ENCODE measurements at regions of chr13 and their contacts with region 1.

Region 1: DNA sequence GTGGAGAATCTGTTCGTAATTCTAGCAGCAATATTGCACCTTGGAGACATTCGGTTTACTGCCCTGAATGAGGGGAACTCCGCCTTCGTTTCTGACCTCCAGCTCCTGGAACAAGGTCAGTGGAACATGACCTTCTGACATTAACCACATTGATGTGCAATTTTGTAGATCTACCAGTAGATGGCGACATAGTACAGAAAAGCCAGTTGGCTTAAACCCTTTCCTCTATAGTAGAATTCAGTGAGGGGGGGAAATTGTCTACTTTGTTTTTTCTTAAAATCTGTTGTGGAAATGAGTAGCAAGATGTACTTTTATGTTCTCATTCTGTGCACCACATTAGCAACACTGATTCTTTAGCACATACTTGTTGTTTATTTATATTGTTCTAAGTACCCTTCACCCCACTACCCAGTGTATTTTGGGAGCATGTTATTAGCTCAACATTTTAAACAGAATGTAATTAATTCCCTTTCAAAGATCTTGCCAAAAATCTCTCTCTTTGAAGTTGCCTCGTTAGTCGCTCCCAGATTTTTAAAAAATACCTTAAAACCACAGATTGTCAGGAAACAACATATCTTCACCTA is 332.2 kb downstream of the MYO16 start:
- DNase-seq: no peak
- H3K4me3 Mint-ChIP-seq: no peak overlapping the region
- H3K27ac Mint-ChIP-seq: no peak overlapping the region
- H3K4me1 Mint-ChIP-seq: no peaks in the 10 kb centered on the region
- H3K27me3 Mint-ChIP-seq: peaks cover 2% of the 10 kb centered on the region

Region 2: GRCh38 chr13:109026266-109026665 is 64.6 kb after region 1 on chr13:
- intact Hi-C with region 1: loop called (anchors 10 kb)
- DNase-seq: no peak
- H3K4me3 Mint-ChIP-seq: no peak overlapping the region
- H3K27ac Mint-ChIP-seq: no peak overlapping the region
- H3K4me1 Mint-ChIP-seq: no peaks in the 10 kb centered on the region
- H3K27me3 Mint-ChIP-seq: no peaks in the 10 kb centered on the region

Region 3: DNA sequence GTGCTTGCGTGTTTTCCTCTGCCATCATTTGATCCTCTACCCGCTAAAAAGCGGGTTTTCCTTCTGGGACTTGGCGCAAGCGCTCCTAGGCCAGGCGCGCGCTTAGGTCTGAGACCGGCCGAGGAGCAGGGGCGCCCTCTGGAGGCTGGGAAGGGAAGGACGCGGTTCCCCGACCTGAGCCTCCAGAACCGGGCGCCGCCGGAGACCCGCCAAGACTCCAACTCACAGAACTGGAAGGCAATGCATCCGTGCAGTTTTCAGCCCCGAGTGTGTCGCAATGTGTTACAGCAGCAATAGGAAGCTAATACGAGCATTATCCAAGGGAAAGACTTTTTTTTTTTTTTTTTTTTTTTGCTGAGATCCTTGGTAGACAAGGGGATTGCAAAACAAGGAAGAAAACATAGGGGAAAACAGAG is 1154.4 kb after region 1 on chr13:
- intact Hi-C with region 1: loop called (anchors 1 kb)
- DNase-seq: peak; percentile 46
- H3K4me3 Mint-ChIP-seq: no peak overlapping the region
- H3K27ac Mint-ChIP-seq: no peak overlapping the region
- H3K4me1 Mint-ChIP-seq: no peaks in the 10 kb centered on the region
- H3K27me3 Mint-ChIP-seq: peaks cover 14% of the 10 kb centered on the region

Measured in activated T-helper 2 cell treated with anti-CD3 and anti-CD28 coated beads, Interferon-gamma antibody, Interleukin-2, Interleukin-4, amounts not matched to agents 10 μg/mL and 5 μg/mL and 100 μg/mL, durations not matched to agents 14 hours and 24 hours and 36 hours (primary cell).